HepG2 (cell line): ENCODE measurements at regions of chr7 and their contacts with region 1.

Region 1: DNA sequence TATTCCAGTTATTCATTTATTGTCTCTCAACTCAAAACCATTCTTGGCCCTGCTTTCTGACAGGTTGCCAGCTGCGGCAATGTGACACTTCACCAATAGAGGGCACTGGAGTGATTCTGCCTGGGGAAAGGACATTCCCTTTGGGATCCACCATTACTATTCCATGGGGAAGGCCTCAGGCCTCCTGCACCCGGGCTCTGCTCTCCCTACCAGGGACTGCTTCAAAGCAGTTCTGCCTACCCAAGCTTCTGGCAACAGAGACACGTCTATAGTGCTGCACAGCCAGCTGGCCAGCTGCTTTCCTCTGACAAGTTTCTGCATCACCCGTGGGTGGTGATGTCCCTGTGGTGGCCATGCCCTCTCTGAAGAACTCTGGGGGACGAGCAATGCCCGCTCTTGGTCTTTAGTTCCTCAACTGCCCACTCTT is 163.8 kb downstream of the ELMO1 start:
- DNase-seq: peak; percentile 16
- ATAC-seq: peak; percentile 83
- H3K4me3 ChIP-seq: no peak overlapping the region
- H3K27ac ChIP-seq: no peak overlapping the region
- H3K4me1 ChIP-seq: no peaks in the 10 kb centered on the region
- H3K27me3 ChIP-seq: no peaks in the 10 kb centered on the region
- CTCF ChIP-seq: peak; percentile 83
- EP300 ChIP-seq: no peak
- POLR2A ChIP-seq: no peak
- RAD21 ChIP-seq: peak; percentile 48; the same call in 1 of the 2 replicates

Region 2: DNA sequence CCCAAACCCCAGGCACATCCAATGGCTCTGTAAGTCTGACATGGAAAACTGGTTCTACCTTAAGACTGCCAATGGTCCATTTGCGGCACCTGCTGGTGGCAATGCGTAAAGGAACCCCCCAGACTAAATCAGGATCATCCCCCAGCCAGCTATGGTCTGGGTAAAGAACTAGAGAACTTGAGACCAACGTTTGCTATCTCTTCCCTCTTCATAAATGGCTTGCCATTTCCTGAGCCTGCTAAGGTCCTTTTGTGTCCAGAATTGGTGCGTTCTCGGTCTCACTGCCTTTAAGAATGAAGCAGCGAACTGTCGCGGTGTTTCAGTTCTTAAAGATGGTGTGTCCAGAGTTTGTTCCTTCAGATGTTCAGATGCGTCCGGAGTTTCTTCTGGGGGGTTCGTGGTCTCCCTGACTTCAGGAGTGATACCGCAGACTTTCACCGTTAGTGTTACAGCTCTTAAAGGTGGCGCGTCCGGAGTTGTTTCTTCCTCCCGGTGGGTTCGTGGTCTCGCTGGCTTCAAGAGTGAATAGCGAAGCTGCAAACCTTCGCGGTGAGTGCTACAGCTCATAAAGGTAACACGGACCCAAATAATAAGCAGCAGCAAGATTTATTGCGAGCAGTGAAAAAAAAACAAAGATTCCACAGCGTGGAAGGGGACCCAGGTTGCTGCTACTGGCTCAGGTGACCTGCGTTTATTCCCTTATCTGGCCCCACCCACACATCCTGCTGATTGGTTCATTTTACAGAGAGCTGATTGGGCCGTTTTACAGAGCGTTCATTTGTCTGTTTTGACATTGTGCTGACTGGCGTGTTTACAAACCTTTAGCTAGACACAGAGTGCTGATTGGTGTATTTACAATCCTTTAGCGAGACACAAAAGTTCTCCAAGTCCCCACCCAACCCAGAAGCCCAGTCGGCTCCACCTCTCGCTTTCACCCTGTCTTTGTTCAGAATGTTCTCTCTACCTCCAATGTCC is 68.4 kb after region 1 on chr7:
- CTCF ChIA-PET with region 1: interaction called, 6 read pairs
- POLR2A ChIA-PET with region 1: no interaction called
- in situ Hi-C with region 1: no loop called
- intact Hi-C with region 1: loop called (anchors 2 kb)
- DNase-seq: no peak
- ATAC-seq: peak; percentile 63
- H3K4me3 ChIP-seq: no peak overlapping the region
- H3K27ac ChIP-seq: no peak overlapping the region
- H3K4me1 ChIP-seq: peaks cover 7% of the 10 kb centered on the region; the same call in 1 of the 2 replicates
- H3K27me3 ChIP-seq: no peaks in the 10 kb centered on the region; a peak in 1 of 5 replicates
- CTCF ChIP-seq: peak; percentile 47
- EP300 ChIP-seq: no peak
- POLR2A ChIP-seq: no peak
- RAD21 ChIP-seq: no peak

Region 3: GRCh38 chr7:37448636-37449361 is 164.0 kb after region 1 on chr7 and contains the start of gene ELMO1:
- CTCF ChIA-PET with region 1: interaction called, 3 read pairs
- POLR2A ChIA-PET with region 1: no interaction called
- in situ Hi-C with region 1: no loop called
- intact Hi-C with region 1: loop called (anchors 1 kb)
- DNase-seq: peak; percentile 34
- ATAC-seq: peak; percentile 99
- H3K4me3 ChIP-seq: peak within 1 kb of the TSS; percentile 26 to 68 (median 51); a peak in 5 of 6 replicates
- H3K27ac ChIP-seq: no peak within 1 kb of the TSS
- H3K4me1 ChIP-seq: no peaks in the 10 kb centered on the region
- H3K27me3 ChIP-seq: peaks cover 0 to 29% of the 10 kb centered on the region in 2 experiments; a peak in 2 of 5 replicates
- CTCF ChIP-seq: peak; percentile 26; the same call in 1 of the 2 replicates
- EP300 ChIP-seq: no peak
- POLR2A ChIP-seq: no peak
- RAD21 ChIP-seq: 0 out of 2 replicates have a peak, but pooled peaks have one; percentile 10
- total RNA-seq, gene ELMO1: 0.11 TPM in 1 of 2 replicates, not detected in the other

Region 4: GRCh38 chr7:37495574-37496184 is 210.9 kb after region 1 on chr7:
- CTCF ChIA-PET with region 1: interaction called, 5 read pairs
- POLR2A ChIA-PET with region 1: no interaction called
- in situ Hi-C with region 1: no loop called
- intact Hi-C with region 1: loop called (anchors 1 kb)
- DNase-seq: peak; percentile 13
- ATAC-seq: no peak
- H3K4me3 ChIP-seq: no peak overlapping the region
- H3K27ac ChIP-seq: no peak overlapping the region
- H3K4me1 ChIP-seq: no peaks in the 10 kb centered on the region
- H3K27me3 ChIP-seq: no peaks in the 10 kb centered on the region
- CTCF ChIP-seq: peak; percentile 48
- EP300 ChIP-seq: no peak
- POLR2A ChIP-seq: no peak
- RAD21 ChIP-seq: no peak

Region 5: DNA sequence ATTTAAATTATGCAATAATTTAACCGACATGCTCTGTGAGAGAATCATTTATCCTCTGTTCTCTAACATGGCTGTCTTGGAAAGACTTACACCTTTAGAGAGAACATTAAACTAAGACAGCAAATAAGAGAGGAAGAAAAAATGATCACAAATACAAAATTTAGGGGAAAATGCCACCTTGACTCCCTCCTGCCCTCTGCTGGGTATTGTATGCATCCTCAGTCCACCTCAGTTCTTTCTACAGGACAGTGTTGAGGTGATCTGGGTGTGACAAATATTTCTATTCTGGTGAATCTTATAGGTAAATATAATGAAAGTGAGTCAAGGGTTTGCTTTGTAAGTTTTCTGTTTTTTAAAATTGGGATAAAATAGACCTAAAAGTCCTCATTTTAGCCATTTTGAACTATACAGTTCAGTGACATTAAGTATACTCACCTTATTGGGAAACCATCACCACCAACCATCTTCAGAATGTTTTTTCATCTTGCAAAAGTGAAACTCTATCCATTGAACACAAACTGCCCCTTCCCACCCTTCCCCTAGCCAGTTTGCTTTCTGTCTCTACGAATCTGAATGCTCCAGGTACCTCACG is 225.3 kb after region 1 on chr7:
- CTCF ChIA-PET with region 1: interaction called, 3 read pairs
- POLR2A ChIA-PET with region 1: no interaction called
- in situ Hi-C with region 1: loop called (anchors 10 kb)
- intact Hi-C with region 1: no loop called
- DNase-seq: peak; percentile 4
- ATAC-seq: peak; percentile 59; the same call in 2 of the 3 replicates
- H3K4me3 ChIP-seq: no peak overlapping the region
- H3K27ac ChIP-seq: no peak overlapping the region
- H3K4me1 ChIP-seq: no peaks in the 10 kb centered on the region
- H3K27me3 ChIP-seq: no peaks in the 10 kb centered on the region; a peak in 1 of 5 replicates
- CTCF ChIP-seq: peak; percentile 57
- EP300 ChIP-seq: no peak
- POLR2A ChIP-seq: no peak
- RAD21 ChIP-seq: no peak